Calu3 (cell line): ENCODE measurements at regions of chr9 and their contacts with region 1.

Region 1: DNA sequence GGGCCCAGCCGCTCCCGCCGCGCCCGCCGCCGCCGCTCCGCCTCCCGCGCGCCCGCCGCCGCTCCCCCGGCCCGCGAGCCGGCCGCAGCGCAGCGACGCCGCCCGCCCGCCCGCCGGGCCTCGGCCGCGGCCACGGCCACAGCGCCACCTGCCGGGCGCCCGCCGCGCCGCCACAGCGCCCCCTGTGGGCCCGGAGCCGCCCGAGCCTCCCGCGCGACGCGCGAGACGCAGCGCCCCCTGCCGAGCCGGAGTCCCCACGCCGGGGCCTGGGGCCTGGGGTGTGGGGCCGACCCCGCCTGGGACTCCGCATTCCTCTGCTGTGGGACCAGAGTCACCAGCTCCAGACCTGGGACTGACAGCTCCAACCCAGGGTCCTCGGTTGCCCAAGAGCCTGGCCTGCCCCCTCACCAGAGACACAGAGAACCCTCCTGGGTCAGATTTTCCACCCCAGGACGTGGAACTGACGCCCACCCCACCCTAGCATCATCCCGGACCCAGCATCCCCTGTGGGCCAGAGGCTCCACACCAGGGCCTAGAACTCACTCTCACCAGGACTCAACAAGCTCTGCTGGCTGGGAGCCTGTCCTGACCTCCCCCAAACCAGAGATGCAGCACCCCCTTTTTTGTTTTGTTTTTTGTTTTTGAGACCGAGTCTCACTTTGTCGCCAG is at the start of gene RAPGEF1:
- DNase-seq: peak; percentile 79
- H3K4me3 Mint-ChIP-seq: peak within 1 kb of the TSS; percentile 78
- H3K27ac Mint-ChIP-seq: no peak within 1 kb of the TSS
- H3K4me1 Mint-ChIP-seq: peaks cover 38% of the 10 kb centered on the region
- H3K27me3 Mint-ChIP-seq: no peaks in the 10 kb centered on the region
- CTCF ChIP-seq: peak; percentile 82
- total RNA-seq, gene RAPGEF1: 32.5 and 33.4 TPM in 2 replicates

Region 2: DNA sequence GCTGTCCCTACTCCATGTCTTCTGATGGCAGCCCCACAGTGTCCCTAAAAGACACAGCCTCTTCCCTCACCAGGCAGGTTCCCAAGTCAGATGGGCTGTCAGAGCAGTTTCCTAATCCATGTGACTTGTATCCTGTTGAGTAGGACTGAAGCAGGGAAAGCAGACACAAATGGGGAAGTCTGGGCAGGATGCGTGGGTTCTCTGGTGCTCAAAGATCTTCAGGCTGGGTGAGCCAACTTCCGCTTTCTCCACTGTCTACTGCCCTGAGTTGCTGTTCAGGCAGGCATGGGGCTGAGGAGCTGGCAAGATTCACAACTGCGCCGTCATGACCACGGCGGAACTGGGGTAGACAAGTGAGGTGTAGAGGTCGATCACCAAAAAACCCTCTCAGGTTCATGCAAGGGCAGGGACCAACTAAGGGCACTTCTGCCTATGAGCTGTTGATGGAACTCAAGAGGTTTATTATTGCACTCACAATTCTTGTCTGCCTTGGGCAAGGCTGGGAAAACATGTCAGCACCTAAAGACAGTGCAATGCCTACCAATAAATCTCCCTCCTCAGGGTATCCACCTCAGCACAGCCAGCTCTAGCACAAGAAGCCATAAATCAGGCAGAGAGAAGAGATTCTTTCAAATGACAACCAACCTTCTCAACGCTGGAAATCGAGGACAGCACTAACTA is 83.6 kb before region 1 on chr9:
- CTCF ChIA-PET with region 1: no interaction called
- intact Hi-C with region 1: loop called (anchors 10 kb)
- DNase-seq: no peak
- H3K4me3 Mint-ChIP-seq: no peak overlapping the region
- H3K27ac Mint-ChIP-seq: no peak overlapping the region
- H3K4me1 Mint-ChIP-seq: peaks cover 41% of the 10 kb centered on the region
- H3K27me3 Mint-ChIP-seq: no peaks in the 10 kb centered on the region
- CTCF ChIP-seq: no peak

Region 3: DNA sequence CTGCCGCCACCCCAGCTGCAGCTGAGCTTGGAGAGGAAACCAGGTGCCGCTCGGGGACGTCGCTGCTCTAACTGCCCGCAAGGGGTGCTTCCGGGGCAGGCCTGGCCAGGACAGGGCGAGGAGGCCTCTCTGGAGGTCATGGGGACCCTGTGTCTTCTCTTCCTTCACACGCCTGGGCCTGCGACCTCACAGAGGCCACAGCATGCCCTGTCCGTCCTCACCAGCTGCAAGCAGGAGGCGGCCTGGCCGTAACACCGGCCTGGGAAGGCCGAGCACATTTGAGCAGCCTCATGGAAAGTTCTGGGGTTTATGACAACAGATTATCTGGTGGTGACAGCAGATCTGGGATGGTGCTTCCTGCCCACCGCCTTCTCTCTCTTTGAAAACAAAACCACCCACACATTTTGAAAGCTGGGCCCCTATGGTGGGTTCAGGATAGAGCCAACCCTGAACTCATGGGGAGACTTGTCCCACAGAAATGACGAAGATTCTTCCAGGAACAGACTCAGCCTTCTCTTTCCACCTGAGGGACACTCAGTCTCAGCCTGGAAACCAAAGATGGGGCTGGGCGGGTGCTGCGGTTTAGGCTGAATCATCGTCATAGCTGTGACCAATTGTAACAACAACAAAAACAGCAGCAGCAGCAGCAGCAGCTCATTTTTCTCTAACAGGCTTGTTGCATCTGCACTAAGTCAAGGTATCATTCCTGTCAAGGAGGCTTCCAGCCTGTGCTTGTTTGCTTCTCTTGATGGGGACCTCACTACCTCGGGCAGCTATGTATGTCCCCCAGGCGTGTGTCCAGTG is 99.4 kb after region 1 on chr9:
- CTCF ChIA-PET with region 1: no interaction called
- intact Hi-C with region 1: no loop called
- DNase-seq: no peak
- H3K4me3 Mint-ChIP-seq: no peak overlapping the region
- H3K27ac Mint-ChIP-seq: no peak overlapping the region
- H3K4me1 Mint-ChIP-seq: no peaks in the 10 kb centered on the region
- H3K27me3 Mint-ChIP-seq: peaks cover 78% of the 10 kb centered on the region
- CTCF ChIP-seq: no peak